ENCODE measurements at regions of chr2 and their contacts with region 1.

Region 1: GRCh38 chr2:72887754-72888437 is 688 bp downstream of the SPR start:
- DNase-seq: peak; percentile 81
- H3K27ac ChIP-seq: peak overlapping the region; percentile 87
- CTCF ChIP-seq: peak; percentile 92

Region 2: GRCh38 chr2:72915907-72916742 is 28.2 kb after region 1 on chr2:
- CTCF ChIA-PET with region 1: interaction called, 21 read pairs
- POLR2A ChIA-PET with region 1: no interaction called
- DNase-seq: peak; percentile 55
- H3K27ac ChIP-seq: no peak overlapping the region
- CTCF ChIP-seq: no peak

Region 3: GRCh38 chr2:72927619-72928550 is 40.0 kb after region 1 on chr2:
- CTCF ChIA-PET with region 1: interaction called, 13 read pairs
- POLR2A ChIA-PET with region 1: no interaction called
- DNase-seq: no peak
- H3K27ac ChIP-seq: no peak overlapping the region
- CTCF ChIP-seq: no peak

Region 4: DNA sequence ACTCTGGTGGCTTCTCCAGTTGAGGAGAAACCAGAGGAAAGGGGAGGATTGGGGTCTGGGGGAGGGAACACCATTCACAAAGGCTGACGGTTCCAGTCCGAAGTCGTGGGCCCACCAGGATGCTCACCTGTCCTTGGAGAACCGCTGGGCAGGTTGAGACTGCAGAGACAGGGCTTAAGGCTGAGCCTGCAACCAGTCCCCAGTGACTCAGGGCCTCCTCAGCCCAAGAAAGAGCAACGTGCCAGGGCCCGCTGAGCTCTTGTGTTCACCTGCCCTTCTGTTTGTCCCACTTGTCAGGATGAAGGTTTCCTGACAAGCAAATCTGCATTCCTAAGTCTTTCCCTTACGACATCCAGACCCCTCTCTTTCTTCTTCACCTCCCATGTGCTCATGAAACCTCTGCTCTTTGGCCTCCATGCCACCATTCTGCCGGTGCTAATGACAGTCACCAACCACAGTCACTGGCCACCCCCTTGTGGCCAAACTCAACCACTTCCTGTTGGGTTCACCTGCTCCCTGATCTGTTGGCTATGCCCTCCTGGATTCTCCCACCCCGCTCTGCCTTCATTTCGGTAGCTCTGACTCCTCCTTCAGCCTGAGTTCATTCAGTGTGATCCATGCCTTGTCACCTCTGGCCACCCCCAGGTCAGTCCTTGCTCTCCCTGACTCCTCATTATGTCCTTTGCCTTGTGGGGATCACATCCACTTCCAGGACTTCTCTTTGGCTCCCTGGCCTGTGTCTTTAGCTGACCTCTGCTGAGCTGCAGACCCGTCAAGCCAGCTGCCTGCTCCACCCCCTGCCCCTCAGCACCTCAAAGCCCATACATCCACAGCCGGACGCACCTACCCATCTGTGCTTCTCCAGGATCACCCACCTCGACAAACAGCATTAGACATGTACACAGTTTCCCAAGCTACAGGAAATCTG is 47.1 kb after region 1 on chr2:
- CTCF ChIA-PET with region 1: interaction called, 19 read pairs
- POLR2A ChIA-PET with region 1: no interaction called
- DNase-seq: peak; percentile 62
- H3K27ac ChIP-seq: no peak overlapping the region
- CTCF ChIP-seq: no peak

Region 5: GRCh38 chr2:72956936-72957335 is 69.0 kb after region 1 on chr2:
- CTCF ChIA-PET with region 1: interaction called, 10 read pairs
- POLR2A ChIA-PET with region 1: no interaction called
- DNase-seq: no peak
- H3K27ac ChIP-seq: no peak overlapping the region
- CTCF ChIP-seq: no peak

Region 6: GRCh38 chr2:72973566-72974435 is 85.9 kb after region 1 on chr2:
- CTCF ChIA-PET with region 1: interaction called, 39 read pairs
- POLR2A ChIA-PET with region 1: no interaction called
- DNase-seq: peak; percentile 76
- H3K27ac ChIP-seq: no peak overlapping the region
- CTCF ChIP-seq: peak; percentile 81

Measured in RWPE1 (cell line).